Activated T-helper 2 cell treated with anti-CD3 and anti-CD28 coated beads, Interferon-gamma antibody, Interleukin-2, Interleukin-4, amounts not matched to agents 10 μg/mL and 5 μg/mL and 100 μg/mL, durations not matched to agents 14 hours and 24 hours and 36 hours (primary cell): ENCODE measurements at regions of chr14 and their contacts with region 1.

Region 1: GRCh38 chr14:65462411-65462810 is 49.9 kb downstream of the FUT8 start:
- DNase-seq: no peak
- H3K4me3 Mint-ChIP-seq: peak overlapping the region; percentile 34
- H3K27ac Mint-ChIP-seq: peak overlapping the region; percentile 87
- H3K4me1 Mint-ChIP-seq: peaks cover 48% of the 10 kb centered on the region
- H3K27me3 Mint-ChIP-seq: no peaks in the 10 kb centered on the region

Region 2: DNA sequence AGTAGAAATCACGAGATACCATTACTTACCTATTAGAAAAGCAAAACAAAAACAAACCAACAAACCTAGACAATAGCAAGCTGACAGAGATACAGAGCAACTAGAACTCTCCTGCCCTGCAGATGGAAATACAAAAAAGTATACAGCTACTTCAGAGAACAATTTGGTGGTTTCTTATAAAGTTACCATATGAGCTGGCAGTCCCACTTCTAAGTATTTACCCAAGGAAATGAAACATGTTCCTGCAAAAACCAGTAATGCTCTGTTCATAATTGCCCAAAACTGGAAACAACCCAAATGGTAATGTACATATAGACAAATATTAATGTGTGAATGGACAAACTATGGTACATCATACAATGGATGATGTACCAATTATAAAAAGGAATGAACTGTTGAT is 18.2 kb before region 1 on chr14:
- intact Hi-C with region 1: loop called (anchors 1 kb)
- DNase-seq: no peak
- H3K4me3 Mint-ChIP-seq: no peak overlapping the region
- H3K27ac Mint-ChIP-seq: peak overlapping the region; percentile 53
- H3K4me1 Mint-ChIP-seq: peaks cover 30% of the 10 kb centered on the region
- H3K27me3 Mint-ChIP-seq: no peaks in the 10 kb centered on the region

Region 3: GRCh38 chr14:65478596-65478995 is 16.2 kb after region 1 on chr14:
- intact Hi-C with region 1: loop called (anchors 1 kb)
- DNase-seq: no peak
- H3K4me3 Mint-ChIP-seq: no peak overlapping the region
- H3K27ac Mint-ChIP-seq: peak overlapping the region; percentile 19
- H3K4me1 Mint-ChIP-seq: peaks cover 73% of the 10 kb centered on the region
- H3K27me3 Mint-ChIP-seq: no peaks in the 10 kb centered on the region

Region 4: GRCh38 chr14:65502676-65503124 is 40.3 kb after region 1 on chr14:
- intact Hi-C with region 1: loop called (anchors 5 kb)
- DNase-seq: no peak
- H3K4me3 Mint-ChIP-seq: no peak overlapping the region
- H3K27ac Mint-ChIP-seq: peak overlapping the region; percentile 21
- H3K4me1 Mint-ChIP-seq: peaks cover 38% of the 10 kb centered on the region
- H3K27me3 Mint-ChIP-seq: no peaks in the 10 kb centered on the region

Region 5: DNA sequence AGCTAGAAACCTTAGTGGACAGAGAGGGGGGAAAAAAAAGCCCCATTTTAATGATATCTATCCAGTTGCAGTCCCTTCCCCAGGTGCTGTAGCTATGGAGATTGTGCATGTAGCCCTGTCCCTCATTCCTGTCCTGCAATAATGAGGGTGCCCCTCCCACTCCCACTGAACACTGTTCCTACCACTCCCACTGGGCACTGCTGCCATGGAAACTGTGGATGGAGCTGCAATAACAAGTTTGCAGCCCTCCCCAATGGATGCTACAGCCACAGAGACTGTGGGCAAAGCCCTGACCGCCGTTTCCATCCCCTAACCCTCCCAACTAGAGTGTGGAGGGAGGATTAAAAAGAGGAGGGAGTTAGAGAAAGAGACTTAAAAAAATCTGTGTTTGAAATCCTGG is 188.4 kb after region 1 on chr14:
- intact Hi-C with region 1: no loop called
- DNase-seq: no peak
- H3K4me3 Mint-ChIP-seq: no peak overlapping the region
- H3K27ac Mint-ChIP-seq: no peak overlapping the region
- H3K4me1 Mint-ChIP-seq: no peaks in the 10 kb centered on the region
- H3K27me3 Mint-ChIP-seq: no peaks in the 10 kb centered on the region